Activated CD4-positive, alpha-beta memory T cell treated with anti-CD3 and anti-CD28 coated beads for 36 hours (primary cell): ENCODE measurements at regions of chr21 and their contacts with region 1.

Region 1: DNA sequence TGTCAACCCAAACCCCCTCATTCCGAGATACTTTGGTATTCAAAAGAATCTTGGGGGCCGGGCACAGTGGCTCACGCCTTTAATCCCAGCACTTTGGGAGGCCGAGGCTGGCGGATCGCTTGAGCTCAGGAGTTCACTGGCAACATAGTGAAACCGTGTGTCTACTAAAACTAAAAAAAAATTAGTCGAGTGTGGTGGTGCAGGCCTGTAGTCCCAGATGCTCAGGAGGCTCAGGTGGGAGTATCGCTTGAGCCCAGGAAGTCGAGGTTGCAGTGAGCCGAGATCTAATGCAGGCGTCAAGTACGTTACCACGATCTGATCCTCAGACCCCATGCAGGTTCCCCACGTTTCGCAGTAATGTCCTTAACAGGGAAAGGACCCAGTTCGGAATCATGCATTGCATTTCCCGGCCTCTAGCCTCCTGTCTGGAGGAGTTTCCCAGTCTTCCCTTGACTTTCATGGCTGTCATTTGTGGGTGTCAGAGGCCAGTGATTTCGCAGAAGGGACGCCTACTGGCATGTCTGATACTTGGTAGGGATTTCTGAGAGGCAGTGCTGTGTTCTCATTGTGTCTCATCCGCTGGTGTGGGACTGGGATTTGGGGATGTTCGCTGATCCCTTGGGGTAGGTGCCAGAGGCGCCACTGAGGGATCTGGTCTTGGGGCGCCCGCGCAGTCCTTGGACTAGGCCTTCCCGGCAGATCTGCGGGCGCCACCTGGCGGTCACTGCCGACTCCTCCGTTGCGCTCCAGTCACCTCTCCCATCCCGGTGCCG is 39.3 kb upstream of the HMGN1 start:
- DNase-seq: peak; percentile 92
- H3K4me3 Mint-ChIP-seq: peak overlapping the region; percentile 80
- H3K27ac Mint-ChIP-seq: peak overlapping the region; percentile 87
- H3K4me1 Mint-ChIP-seq: peaks cover 32% of the 10 kb centered on the region
- H3K27me3 Mint-ChIP-seq: no peaks in the 10 kb centered on the region

Region 2: DNA sequence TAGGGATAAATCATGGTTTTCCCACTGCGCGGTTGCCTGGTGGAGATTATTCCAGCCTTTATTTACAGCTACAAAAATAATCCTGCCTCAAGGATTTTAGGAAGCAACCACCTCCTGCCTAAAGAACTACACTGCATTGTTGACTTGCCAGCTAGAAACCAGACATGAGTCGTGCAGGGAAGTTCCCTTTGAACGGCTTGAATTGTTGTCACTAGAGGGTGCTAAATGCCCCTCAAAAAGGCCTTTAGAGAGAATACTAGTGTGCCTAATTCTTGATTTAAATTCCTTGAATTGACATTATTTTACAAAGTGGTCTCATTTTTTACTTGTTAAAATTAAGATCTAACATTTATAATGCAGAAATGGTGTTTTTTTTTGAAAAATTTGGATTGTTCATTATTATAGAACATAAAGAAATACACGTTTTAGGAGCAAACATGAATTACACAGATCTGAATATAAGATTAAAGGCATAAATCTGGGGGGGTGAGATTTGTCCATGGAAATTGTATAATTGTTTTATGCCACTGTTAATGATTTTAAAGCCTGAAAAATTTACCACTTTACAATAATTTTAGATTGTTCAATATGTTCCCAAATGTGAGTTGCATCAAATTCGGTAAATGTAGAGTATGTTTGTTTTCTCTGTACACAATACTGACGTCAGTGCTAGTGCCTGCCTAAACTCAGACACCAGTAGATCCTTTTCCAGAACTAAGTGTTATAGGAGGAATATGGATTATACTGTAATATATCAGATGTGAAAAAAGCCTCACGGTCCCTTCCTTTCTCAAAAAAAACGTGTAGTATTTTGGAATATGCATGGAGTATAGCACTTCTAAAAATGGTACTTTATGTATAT is 882.3 kb before region 1 on chr21:
- CTCF ChIA-PET with region 1: no interaction called
- POLR2A ChIA-PET with region 1: no interaction called
- intact Hi-C with region 1: loop called (anchors 5 kb)
- DNase-seq: peak; percentile 22
- H3K4me3 Mint-ChIP-seq: no peak overlapping the region
- H3K27ac Mint-ChIP-seq: no peak overlapping the region
- H3K4me1 Mint-ChIP-seq: peaks cover 4% of the 10 kb centered on the region
- H3K27me3 Mint-ChIP-seq: peaks cover 30% of the 10 kb centered on the region

Region 3: GRCh38 chr21:39183237-39184007 is 204.8 kb before region 1 on chr21 and contains the start of gene PSMG1:
- CTCF ChIA-PET with region 1: interaction called, 10 read pairs
- POLR2A ChIA-PET with region 1: interaction called, 6 read pairs
- intact Hi-C with region 1: loop called (anchors 1 kb)
- DNase-seq: peak; percentile 95
- H3K4me3 Mint-ChIP-seq: peak within 1 kb of the TSS; percentile 98
- H3K27ac Mint-ChIP-seq: peak within 1 kb of the TSS; percentile 94
- H3K4me1 Mint-ChIP-seq: peaks cover 63% of the 10 kb centered on the region
- H3K27me3 Mint-ChIP-seq: no peaks in the 10 kb centered on the region
- total RNA-seq, gene PSMG1: 82.3 to 85.9 TPM